AG04449 (cell line): ENCODE measurements at regions of chr1 and their contacts with region 1.

Region 1: GRCh38 chr1:17475729-17476128 is 36.3 kb upstream of the RCC2 start:
- DNase-seq: peak; percentile 55
- H3K4me3 ChIP-seq: no peak overlapping the region
- CTCF ChIP-seq: no peak

Region 2: GRCh38 chr1:17451731-17452130 is 24.0 kb before region 1 on chr1:
- CTCF ChIA-PET with region 1: interaction called, 22 read pairs
- POLR2A ChIA-PET with region 1: no interaction called
- DNase-seq: no peak
- H3K4me3 ChIP-seq: no peak overlapping the region
- CTCF ChIP-seq: no peak

Region 3: DNA sequence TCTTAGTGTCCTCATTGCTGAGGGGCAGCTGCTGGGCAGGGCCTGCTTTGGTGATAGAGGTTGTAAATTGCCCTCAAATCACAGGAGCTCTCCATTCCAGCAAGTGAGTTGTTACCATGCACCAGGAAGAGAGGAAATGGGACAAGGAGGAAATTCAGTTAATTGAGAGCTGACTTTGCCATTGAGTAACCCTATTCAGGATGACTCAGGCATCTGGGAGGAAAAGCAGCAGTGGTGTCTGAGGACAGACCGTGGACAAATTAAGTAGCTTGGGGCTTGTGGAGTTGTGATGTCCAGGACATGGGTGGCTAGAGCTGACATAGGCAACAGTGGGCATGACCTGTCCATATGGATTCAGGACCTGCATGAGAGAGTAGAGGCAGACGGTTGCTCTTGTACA is 69.6 kb after region 1 on chr1:
- CTCF ChIA-PET with region 1: no interaction called
- POLR2A ChIA-PET with region 1: no interaction called
- DNase-seq: no peak
- H3K4me3 ChIP-seq: no peak overlapping the region
- CTCF ChIP-seq: no peak